ENCODE measurements at regions of chr6 and their contacts with region 1.

Region 1: DNA sequence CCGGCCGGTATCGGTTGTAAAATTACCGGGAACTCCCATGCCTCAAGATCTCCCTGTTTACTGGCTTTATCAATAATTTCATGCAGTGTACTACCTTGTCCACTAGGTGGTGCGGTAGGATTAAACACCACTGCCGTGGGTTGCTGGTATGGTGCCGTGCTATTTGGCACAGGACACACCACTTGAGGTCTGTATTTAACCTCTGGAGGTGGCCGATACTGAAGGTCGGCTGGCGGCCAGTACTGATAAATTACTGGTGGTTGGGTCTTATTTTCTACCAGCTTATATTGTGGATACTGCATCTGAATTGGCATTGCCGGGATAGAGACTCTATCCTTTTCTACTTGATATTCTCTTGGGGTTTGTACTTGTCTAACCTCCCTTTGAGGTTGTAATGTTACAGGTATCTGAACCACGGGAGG is 14.3 kb upstream of the PTCRA start:
- DNase-seq: peak; percentile 84
- ATAC-seq: peak; percentile 98
- H3K4me3 Mint-ChIP-seq: no peak overlapping the region
- H3K27ac Mint-ChIP-seq: peak overlapping the region; percentile 7
- H3K4me1 Mint-ChIP-seq: peaks cover 17% of the 10 kb centered on the region
- H3K27me3 Mint-ChIP-seq: no peaks in the 10 kb centered on the region

Region 2: DNA sequence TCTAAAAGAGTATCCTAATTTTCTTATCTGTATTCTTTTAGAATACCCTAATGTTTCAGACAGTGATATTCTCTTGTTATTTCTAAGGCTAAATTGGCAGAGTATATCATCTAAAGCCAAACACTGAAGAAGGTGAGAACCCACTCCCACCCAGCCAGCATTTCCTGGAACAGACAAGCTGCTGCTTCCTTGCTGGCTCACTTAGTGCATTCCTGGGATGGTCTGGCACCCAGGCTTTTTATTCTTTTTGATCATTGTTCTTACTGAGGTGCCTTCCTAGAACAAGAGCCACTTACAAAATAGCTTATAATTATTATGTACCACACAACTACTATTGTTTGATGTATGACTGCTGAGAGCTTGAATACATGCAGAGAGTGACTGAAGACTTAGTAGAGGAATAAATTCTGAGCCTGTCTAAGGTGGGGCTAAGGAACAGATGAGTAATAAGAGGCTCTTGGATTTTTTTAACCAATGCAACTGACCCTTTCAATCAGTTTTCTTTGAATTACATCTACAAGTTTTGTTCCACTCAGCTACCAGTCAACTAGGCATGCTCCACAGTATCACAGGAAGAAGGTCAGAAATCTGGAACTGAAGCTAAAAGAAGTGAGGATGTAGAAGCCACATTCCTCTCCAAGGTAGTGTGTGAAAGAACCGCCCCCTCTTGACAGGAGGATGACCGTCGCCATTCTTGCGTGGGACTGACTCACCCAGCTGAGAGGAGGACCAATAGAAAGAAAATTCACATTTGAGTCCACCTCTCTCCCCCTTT is 209.2 kb before region 1 on chr6:
- CTCF ChIA-PET with region 1: interaction called, 17 read pairs
- POLR2A ChIA-PET with region 1: no interaction called
- DNase-seq: peak; percentile 25
- ATAC-seq: peak; percentile 35
- H3K4me3 Mint-ChIP-seq: no peak overlapping the region
- H3K27ac Mint-ChIP-seq: peak overlapping the region; percentile 88
- H3K4me1 Mint-ChIP-seq: peaks cover 43% of the 10 kb centered on the region
- H3K27me3 Mint-ChIP-seq: no peaks in the 10 kb centered on the region

Region 3: DNA sequence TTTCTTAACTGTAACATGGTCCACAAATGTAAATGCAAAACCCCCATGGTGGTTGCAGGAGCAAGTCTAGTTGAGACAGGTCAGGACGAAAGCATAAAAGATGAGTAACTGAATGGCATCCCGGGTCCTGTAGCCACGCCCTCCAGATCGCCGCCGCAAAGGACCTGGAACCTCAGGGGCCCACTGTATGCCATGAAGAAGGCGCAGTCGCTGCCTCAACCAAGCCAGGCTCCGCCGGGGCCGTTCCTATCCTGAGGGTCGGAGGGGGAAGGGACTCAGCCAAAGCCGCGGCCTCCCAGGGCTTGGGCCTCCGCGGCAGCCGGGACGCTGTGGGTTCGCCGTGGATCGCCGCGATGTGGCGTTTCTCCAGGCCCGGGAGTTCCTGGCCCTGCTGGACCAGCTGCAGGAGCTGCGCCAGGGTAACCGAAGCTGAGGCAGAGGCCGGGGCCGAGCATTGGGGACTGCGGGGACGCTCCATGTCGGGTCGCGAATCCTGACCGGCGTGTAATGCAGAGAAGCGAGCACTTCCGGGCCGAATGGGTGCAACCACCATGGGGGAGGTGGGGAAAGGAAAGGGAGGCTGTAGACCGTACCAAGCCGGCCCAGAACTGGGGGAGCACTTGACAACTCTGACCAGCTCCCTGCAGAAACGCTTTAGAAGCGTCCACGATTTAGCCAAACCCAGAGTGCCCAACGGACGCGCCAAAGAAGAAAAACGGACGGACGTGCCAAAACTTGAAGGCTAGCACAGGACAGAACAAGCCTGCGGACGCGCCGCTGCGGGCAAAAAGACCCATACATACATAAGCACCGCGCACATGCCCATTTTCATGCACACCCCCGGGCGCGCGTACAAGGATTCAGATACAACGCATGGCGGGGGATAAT is 11.0 kb before region 1 on chr6:
- CTCF ChIA-PET with region 1: interaction called, 12 read pairs
- POLR2A ChIA-PET with region 1: no interaction called
- DNase-seq: peak; percentile 96
- ATAC-seq: peak; percentile 93
- H3K4me3 Mint-ChIP-seq: peak overlapping the region; percentile 94
- H3K27ac Mint-ChIP-seq: peak overlapping the region; percentile 98
- H3K4me1 Mint-ChIP-seq: peaks cover 27% of the 10 kb centered on the region
- H3K27me3 Mint-ChIP-seq: no peaks in the 10 kb centered on the region

Region 4: GRCh38 chr6:43575772-43576551 is 674.4 kb after region 1 on chr6 and contains the starts of genes POLH and XPO5:
- CTCF ChIA-PET with region 1: no interaction called
- POLR2A ChIA-PET with region 1: no interaction called
- DNase-seq: peak; percentile 93
- ATAC-seq: peak; percentile 96
- H3K4me3 Mint-ChIP-seq: peak within 1 kb of the TSS; percentile 97
- H3K27ac Mint-ChIP-seq: peak within 1 kb of the TSS; percentile 89
- H3K4me1 Mint-ChIP-seq: peaks cover 44% of the 10 kb centered on the region
- H3K27me3 Mint-ChIP-seq: no peaks in the 10 kb centered on the region
- total RNA-seq, gene POLH: 73.1 to 75.2 TPM
- total RNA-seq, gene XPO5: 57.6 to 62.1 TPM

Region 5: DNA sequence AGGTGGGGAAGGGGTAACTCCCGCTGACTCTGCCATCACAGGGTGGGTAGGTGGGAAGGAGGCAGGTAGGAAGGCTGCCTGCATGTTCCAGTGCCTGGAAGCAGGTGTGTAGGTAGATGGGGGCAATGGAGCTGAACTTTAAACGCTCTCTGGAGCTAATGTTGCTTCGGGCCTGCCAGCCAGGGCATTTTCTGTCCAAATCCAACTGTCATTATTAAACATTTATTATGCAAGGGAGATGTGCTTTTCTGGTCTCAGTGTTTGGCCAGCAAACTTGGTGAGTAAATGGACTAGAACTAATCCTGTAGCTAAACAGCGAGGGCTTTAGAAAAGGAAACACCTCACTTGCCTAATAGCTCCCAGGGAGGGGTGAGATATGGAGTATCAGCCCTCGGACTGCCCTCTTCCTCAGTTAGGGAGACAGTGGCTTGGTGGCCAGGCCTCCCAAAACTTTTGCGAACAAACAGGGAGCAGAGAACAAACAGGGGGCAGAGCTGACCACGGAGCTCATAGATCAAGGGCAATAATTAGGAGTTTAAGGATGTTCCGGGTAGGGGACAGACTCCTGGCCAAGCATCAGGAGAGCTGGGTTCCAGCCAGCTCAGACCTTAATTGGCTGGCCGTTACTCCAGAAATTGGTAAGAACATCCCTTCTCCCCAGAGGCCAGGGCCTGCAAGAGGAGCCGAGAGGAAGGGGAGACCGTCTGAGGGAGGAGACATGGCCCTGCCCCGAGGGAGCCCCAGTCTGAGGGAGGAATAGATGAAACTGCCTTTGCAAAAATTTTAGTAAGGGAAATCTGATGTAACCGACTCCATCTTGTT is 999.6 kb after region 1 on chr6:
- CTCF ChIA-PET with region 1: no interaction called
- POLR2A ChIA-PET with region 1: no interaction called
- DNase-seq: no peak
- ATAC-seq: no peak
- H3K4me3 Mint-ChIP-seq: no peak overlapping the region
- H3K27ac Mint-ChIP-seq: no peak overlapping the region
- H3K4me1 Mint-ChIP-seq: no peaks in the 10 kb centered on the region
- H3K27me3 Mint-ChIP-seq: peaks cover 7% of the 10 kb centered on the region